Activated CD4-positive, alpha-beta memory T cell treated with anti-CD3 and anti-CD28 coated beads for 36 hours (primary cell): ENCODE measurements at regions of chr18 and their contacts with region 1.

Region 1: DNA sequence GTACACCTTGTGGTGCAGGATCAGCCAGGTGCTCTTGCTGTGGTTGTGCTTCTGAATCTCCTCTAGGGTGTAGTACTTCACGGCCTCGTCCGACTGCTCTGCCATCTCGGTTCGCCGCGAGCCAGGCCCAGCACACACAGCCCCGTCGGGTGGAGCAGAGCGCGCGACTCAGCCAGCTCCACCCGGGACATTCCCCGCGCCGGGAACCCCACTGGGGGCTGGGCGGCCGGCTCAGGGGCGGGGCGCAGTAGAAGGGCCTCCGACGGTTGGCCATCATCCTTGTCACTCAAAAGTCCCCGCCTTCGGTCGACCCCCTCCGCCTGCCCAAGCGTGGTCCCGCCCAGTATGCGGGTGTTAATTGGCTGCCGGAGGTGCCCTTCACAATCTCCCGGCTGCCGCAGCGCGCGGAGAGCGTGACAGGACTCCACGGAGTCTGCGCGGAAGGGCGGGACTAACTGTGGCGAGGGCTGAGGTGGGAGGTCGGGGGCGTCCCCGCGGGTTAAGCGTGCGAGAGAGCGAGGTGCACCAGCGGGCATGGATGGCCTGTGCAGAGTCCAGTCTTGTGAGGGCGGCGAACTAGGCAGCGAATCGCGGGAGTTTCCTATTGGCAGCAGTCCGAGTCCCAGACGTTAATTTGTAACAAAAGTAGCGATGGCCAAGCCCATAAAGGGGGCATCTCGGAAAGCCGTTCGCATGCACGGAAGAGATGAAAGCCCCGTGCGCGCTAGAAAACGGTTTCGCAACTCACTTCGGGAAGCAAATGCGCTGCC is at the start of gene CYB5A:
- DNase-seq: peak; percentile 98
- H3K4me3 Mint-ChIP-seq: peak within 1 kb of the TSS; percentile 88
- H3K27ac Mint-ChIP-seq: peak within 1 kb of the TSS; percentile 57
- H3K4me1 Mint-ChIP-seq: peaks cover 12% of the 10 kb centered on the region
- H3K27me3 Mint-ChIP-seq: no peaks in the 10 kb centered on the region
- total RNA-seq, gene CYB5A: 64.4 to 65.2 TPM

Region 2: DNA sequence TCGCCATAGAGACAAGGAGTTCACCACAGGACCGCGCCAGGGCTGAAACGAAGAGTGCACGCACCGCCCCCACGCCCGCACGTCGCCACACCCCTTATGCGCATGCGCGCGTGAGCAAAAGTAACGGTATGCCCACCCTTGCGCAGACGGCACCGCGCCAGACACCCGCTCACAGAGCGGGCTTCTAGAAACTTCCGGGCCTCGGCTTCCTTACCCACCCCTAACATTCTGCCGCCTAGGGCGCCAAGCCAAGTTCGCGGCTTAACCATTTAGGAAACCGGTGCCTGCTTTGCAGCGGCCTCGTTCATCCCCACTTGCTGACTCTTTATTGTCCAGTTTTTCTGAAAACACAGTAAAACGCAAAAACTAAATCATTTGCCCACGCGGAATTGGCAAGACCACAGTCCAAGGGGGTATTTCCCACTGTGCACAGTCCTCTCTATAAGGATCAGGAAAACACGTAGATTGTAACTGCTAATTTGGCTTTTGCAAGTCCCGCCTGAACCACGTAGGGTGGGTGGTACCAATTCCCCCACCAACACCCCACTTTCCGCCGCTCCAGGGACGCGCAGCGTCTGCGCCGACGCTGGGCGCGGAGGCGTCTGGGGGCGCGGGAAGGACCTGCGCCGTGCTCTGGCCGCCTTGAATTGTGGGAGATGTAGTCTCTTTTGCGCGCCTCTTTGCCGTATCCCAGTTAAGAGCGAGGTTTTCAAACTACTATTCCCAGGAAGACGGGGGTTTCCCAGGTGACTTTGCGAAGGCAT is 144.0 kb before region 1 on chr18 and contains the starts of genes FBXO15 and TIMM21:
- CTCF ChIA-PET with region 1: no interaction called
- POLR2A ChIA-PET with region 1: no interaction called
- intact Hi-C with region 1: loop called (anchors 1 kb)
- DNase-seq: peak; percentile 97
- H3K4me3 Mint-ChIP-seq: peak within 1 kb of the TSS; percentile 95
- H3K27ac Mint-ChIP-seq: peak within 1 kb of the TSS; percentile 99
- H3K4me1 Mint-ChIP-seq: peaks cover 40% of the 10 kb centered on the region
- H3K27me3 Mint-ChIP-seq: peaks cover 2% of the 10 kb centered on the region
- total RNA-seq, gene FBXO15: 0.67 to 0.75 TPM
- total RNA-seq, gene TIMM21: 37.1 to 38.3 TPM

Region 3: GRCh38 chr18:74196220-74197119 is 95.5 kb before region 1 on chr18:
- CTCF ChIA-PET with region 1: no interaction called
- POLR2A ChIA-PET with region 1: no interaction called
- intact Hi-C with region 1: loop called (anchors 1 kb)
- DNase-seq: peak; percentile 59
- H3K4me3 Mint-ChIP-seq: peak overlapping the region; percentile 69
- H3K27ac Mint-ChIP-seq: peak overlapping the region; percentile 56
- H3K4me1 Mint-ChIP-seq: peaks cover 6% of the 10 kb centered on the region
- H3K27me3 Mint-ChIP-seq: peaks cover under 1% of the 10 kb centered on the region

Region 4: GRCh38 chr18:74328206-74328605 is 36.2 kb after region 1 on chr18:
- CTCF ChIA-PET with region 1: no interaction called
- POLR2A ChIA-PET with region 1: no interaction called
- intact Hi-C with region 1: no loop called
- DNase-seq: no peak
- H3K4me3 Mint-ChIP-seq: no peak overlapping the region
- H3K27ac Mint-ChIP-seq: no peak overlapping the region
- H3K4me1 Mint-ChIP-seq: no peaks in the 10 kb centered on the region
- H3K27me3 Mint-ChIP-seq: peaks cover 11% of the 10 kb centered on the region

Region 5: DNA sequence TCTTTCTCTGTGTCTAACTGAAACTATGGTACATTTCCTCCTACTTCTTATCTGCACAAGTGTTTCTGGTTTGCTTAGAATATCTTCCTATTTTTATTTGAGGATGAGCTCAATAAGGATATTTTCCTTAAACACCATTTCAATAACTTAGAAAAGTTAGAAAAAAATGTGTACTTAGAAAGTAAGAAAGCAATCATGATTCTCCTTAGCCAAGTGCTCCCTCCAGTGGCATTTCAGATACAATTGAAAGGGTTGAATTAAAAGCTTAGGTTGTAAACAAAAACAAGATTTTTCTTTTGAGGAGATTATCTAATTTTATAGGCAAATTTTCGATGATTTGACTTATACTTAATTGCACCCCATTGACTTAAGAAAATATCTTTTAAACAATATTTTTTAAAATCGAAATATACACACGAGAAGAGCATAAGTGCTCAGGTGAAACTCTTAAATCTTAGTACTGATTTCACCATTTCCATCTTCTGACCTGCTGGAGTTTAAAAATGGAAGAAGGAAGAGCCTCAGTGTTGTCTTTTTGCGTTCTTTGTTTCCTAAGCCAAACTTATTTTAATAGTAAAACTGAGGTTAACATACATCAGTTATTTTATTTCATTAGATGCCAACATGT is 50.6 kb after region 1 on chr18:
- CTCF ChIA-PET with region 1: no interaction called
- POLR2A ChIA-PET with region 1: no interaction called
- intact Hi-C with region 1: no loop called
- DNase-seq: no peak
- H3K4me3 Mint-ChIP-seq: no peak overlapping the region
- H3K27ac Mint-ChIP-seq: no peak overlapping the region
- H3K4me1 Mint-ChIP-seq: no peaks in the 10 kb centered on the region
- H3K27me3 Mint-ChIP-seq: peaks cover 6% of the 10 kb centered on the region

Region 6: DNA sequence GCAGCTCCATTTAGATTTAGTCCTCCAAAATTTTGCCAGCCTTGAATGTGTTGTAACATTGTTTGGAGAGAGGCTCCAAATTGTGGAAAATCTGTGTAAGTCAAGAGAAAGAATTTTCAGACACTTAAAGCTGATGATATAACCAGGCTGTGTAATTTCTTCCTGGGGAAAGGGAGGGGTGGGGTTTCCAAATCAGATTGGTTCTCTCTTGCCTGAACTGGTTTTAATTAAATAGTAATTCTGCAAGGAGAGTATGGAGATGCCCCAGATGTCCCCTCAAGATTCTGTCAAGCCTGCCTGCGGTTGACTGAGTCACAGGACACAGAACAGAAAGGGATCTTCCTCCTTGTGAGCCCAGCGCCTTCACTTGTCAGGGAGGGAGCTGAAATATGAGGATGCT is 78.2 kb after region 1 on chr18:
- CTCF ChIA-PET with region 1: no interaction called
- POLR2A ChIA-PET with region 1: no interaction called
- intact Hi-C with region 1: loop called (anchors 5 kb)
- DNase-seq: no peak
- H3K4me3 Mint-ChIP-seq: no peak overlapping the region
- H3K27ac Mint-ChIP-seq: no peak overlapping the region
- H3K4me1 Mint-ChIP-seq: peaks cover 31% of the 10 kb centered on the region
- H3K27me3 Mint-ChIP-seq: peaks cover 5% of the 10 kb centered on the region